Activated naive CD4-positive, alpha-beta T cell treated with anti-CD3 and anti-CD28 coated beads for 36 hours (primary cell): ENCODE measurements at regions of chr2 and their contacts with region 1.

Region 1: DNA sequence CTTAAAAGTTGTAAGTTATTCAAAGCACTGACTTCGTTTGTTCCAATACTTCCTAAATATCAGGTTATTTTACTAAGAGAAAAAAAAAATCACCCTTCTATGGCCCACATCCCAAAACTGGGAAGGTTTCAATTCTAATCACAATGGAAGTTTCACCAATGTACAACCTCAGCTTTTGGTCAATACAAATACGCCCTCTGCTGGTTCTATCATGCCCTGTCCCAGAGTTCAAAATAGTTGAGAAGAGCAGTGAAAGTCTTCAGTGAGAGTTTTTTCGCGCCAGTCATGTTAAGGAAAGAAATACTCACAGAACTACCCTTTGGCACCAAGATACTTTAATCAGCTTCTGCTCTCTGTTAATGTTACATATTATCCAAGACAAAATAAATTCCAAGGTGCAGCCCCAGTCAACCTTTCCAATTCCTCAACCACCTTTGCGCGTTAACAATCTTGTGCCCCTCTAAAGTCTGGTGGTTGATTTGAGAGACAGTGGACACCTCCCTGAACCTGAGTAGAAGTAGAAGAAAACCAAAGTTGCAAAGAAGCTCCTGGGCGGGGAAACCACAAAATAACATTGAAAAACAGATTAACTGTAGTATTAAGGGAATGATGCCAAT is 59.9 kb downstream of the SUMO1 start:
- DNase-seq: peak; percentile 78
- H3K4me3 Mint-ChIP-seq: no peak overlapping the region
- H3K27ac Mint-ChIP-seq: no peak overlapping the region
- H3K4me1 Mint-ChIP-seq: no peaks in the 10 kb centered on the region
- H3K27me3 Mint-ChIP-seq: no peaks in the 10 kb centered on the region

Region 2: GRCh38 chr2:201363857-201364560 is 814.4 kb before region 1 on chr2:
- CTCF ChIA-PET with region 1: no interaction called
- intact Hi-C with region 1: loop called (anchors 5 kb)
- DNase-seq: peak; percentile 48
- H3K4me3 Mint-ChIP-seq: no peak overlapping the region
- H3K27ac Mint-ChIP-seq: no peak overlapping the region
- H3K4me1 Mint-ChIP-seq: peaks cover 13% of the 10 kb centered on the region
- H3K27me3 Mint-ChIP-seq: no peaks in the 10 kb centered on the region

Region 3: GRCh38 chr2:201795607-201796477 is 382.6 kb before region 1 on chr2:
- CTCF ChIA-PET with region 1: no interaction called
- intact Hi-C with region 1: loop called (anchors 1 kb)
- DNase-seq: peak; percentile 15
- H3K4me3 Mint-ChIP-seq: no peak overlapping the region
- H3K27ac Mint-ChIP-seq: no peak overlapping the region
- H3K4me1 Mint-ChIP-seq: no peaks in the 10 kb centered on the region
- H3K27me3 Mint-ChIP-seq: peaks cover 2% of the 10 kb centered on the region

Region 4: GRCh38 chr2:201964631-201965206 is 213.7 kb before region 1 on chr2:
- CTCF ChIA-PET with region 1: interaction called, 3 read pairs
- intact Hi-C with region 1: loop called (anchors 1 kb)
- DNase-seq: peak; percentile 53
- H3K4me3 Mint-ChIP-seq: no peak overlapping the region
- H3K27ac Mint-ChIP-seq: peak overlapping the region; percentile 74
- H3K4me1 Mint-ChIP-seq: no peaks in the 10 kb centered on the region
- H3K27me3 Mint-ChIP-seq: no peaks in the 10 kb centered on the region

Region 5: GRCh38 chr2:202104278-202104870 is 74.1 kb before region 1 on chr2:
- CTCF ChIA-PET with region 1: interaction called, 16 read pairs
- intact Hi-C with region 1: loop called (anchors 1 kb)
- DNase-seq: peak; percentile 75
- H3K4me3 Mint-ChIP-seq: no peak overlapping the region
- H3K27ac Mint-ChIP-seq: no peak overlapping the region
- H3K4me1 Mint-ChIP-seq: no peaks in the 10 kb centered on the region
- H3K27me3 Mint-ChIP-seq: no peaks in the 10 kb centered on the region